Left colon (tissue), 2 donors: ENCODE measurements at regions of chr9 and their contacts with region 1.

Region 1: DNA sequence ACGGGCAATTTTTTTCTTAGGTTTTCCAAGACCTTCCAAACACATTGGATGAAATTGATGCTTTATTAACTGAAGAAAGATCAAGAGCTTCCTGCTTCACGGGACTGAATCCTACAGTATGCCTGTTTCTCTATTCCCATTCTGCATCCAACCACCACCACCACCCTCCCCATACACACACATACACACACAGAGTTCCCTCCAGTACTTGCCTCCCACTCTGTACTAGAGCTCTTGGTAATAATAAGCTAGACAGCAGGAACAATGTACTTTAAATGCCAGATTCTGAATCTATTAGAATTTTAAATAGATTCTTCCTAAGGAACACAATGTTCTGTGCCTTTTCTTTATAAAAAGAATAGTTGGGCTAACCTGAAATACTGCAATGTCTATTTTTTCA is 67.4 kb downstream of the KLF9 start:
- DNase-seq: no peak
- ATAC-seq: no peak

Region 2: DNA sequence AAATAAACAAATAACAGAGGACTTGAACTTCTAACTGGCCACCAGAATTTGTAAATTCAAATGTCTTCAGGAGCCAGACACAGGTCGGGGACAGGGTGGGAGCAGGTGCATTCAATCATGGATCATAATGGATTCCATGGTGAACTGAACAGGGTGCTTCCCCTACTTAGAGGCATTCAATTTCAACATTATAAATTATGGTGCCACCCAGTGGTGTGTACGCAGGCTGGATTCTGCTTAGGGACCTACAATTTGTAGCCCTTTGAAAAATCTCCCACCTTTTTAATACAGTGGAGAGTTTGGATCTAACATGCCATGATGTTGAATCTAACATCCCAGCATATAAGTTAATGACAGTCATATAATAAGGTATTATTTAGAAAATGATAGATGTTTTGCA is 45.1 kb after region 1 on chr9:
- intact Hi-C with region 1: no loop called
- DNase-seq: no peak
- ATAC-seq: peak; percentile 60

Region 3: DNA sequence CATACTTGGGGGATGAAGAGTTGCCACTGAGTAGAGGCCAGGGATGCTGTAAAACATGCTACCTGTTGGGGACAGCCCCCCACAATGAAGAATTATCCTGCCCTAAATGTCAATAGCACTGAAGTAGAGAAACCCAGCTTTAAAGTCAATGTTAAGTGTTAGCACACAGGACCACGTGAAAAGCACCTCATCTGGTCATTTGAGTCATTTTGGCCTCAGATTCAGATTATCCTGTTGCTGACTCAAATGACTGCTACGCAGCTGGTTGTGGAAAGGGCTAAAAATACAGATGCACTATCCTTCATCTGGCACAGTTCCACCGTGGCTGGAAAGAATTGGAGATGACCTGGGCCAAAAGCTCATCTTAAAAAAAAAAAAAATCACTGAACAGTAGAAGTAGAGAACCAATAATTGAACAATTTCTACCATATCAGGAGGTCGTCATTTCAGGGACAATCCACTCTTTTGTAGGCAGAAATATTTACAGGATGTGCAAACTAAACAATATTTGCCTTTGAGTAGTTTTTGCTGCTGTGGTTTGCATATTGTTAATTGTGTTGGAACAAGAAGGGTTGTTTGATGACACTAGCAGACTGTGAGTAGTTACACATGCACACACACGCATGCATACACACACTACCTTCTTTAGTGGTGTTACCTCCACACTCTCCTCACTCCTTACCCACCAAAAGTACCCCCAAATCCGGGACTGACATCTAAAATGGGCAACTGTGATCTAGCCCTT is 262.7 kb after region 1 on chr9:
- intact Hi-C with region 1: loop called (anchors 5 to 10 kb)
- DNase-seq: peak in 1 of 2 donors; percentile 19
- ATAC-seq: no peak